IMR-90 (cell line): ENCODE measurements at regions of chr5 and their contacts with region 1.

Region 1: DNA sequence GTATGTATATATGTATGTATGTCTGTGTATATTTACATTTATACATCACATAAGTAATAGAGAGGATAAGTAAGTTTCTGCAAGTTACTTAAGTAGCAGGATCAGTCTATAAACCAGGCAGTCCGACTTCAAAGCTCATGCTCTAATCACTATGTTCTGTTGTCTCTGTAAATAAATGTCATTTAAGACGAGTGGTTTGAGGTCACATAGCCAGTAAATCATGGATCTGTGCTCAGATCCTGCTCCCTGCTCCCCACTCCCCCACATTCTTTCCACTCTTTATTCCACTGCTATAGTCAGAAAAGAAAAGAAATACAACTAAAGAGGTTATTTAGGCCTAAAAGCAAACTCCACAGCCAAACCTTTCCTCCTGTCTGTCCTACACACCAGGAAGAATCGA is 90.4 kb downstream of the SERINC5 start:
- DNase-seq: no peak
- ATAC-seq: no peak
- H3K4me3 ChIP-seq: no peak overlapping the region
- H3K27ac ChIP-seq: no peak overlapping the region
- H3K4me1 ChIP-seq: no peaks in the 10 kb centered on the region
- H3K27me3 ChIP-seq: no peaks in the 10 kb centered on the region
- CTCF ChIP-seq: no peak
- POLR2A ChIP-seq: no peak
- RAD21 ChIP-seq: no peak

Region 2: GRCh38 chr5:80034962-80035821 is 130.3 kb before region 1 on chr5 and contains the start of gene THBS4:
- CTCF ChIA-PET with region 1: no interaction called
- POLR2A ChIA-PET with region 1: no interaction called
- dilution Hi-C with region 1: no loop called
- in situ Hi-C with region 1: no loop called
- intact Hi-C with region 1: no loop called
- DNase-seq: no peak
- ATAC-seq: peak; percentile 29
- H3K4me3 ChIP-seq: no peak within 1 kb of the TSS
- H3K27ac ChIP-seq: no peak within 1 kb of the TSS
- H3K4me1 ChIP-seq: no peaks in the 10 kb centered on the region
- H3K27me3 ChIP-seq: peaks cover 60% of the 10 kb centered on the region
- CTCF ChIP-seq: no peak
- POLR2A ChIP-seq: no peak
- RAD21 ChIP-seq: no peak
- total RNA-seq, gene THBS4: 0.83 and 0.90 TPM in 2 replicates

Region 3: GRCh38 chr5:80246001-80246758 is 80.7 kb after region 1 on chr5:
- CTCF ChIA-PET with region 1: no interaction called
- POLR2A ChIA-PET with region 1: no interaction called
- dilution Hi-C with region 1: no loop called
- in situ Hi-C with region 1: no loop called
- intact Hi-C with region 1: loop called (anchors 5 kb)
- DNase-seq: peak; percentile 57
- ATAC-seq: peak; percentile 50
- H3K4me3 ChIP-seq: no peak overlapping the region
- H3K27ac ChIP-seq: no peak overlapping the region
- H3K4me1 ChIP-seq: peaks cover 3% of the 10 kb centered on the region
- H3K27me3 ChIP-seq: no peaks in the 10 kb centered on the region
- CTCF ChIP-seq: no peak
- POLR2A ChIP-seq: no peak
- RAD21 ChIP-seq: no peak